CD8-positive, alpha-beta memory T cell (primary cell): ENCODE measurements at regions of chr2 and their contacts with region 1.

Region 1: DNA sequence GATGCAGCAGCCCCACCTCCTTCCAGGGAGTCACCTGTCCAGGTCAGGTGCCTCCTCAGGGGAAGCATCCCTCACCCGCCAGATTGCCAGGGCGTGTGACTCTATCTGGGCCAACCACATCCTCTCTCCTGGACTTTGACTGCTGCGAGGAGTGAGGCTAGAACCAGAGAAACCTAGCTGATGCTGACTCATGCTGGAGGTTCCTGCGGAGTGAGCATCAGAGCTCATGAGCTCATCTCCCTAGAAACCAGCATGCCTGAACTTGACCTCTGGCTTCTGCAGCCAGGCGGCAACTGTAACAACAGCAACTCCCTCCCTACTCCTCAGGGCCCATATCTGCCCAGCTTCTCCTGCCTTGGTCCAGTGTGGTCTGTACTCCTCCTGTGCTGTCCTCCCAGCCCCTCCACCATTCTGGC is 28.3 kb upstream of the NT5DC4 start:
- DNase-seq: peak in 4 of 5 donors; percentile 15 to 58 (median 29)
- H3K4me3 ChIP-seq: no peak overlapping the region
- H3K4me3 Mint-ChIP-seq: peak overlapping the region in 5 of 7 donors; percentile 36 to 63 (median 60)
- H3K27ac ChIP-seq: peak overlapping the region; percentile 21
- H3K27ac Mint-ChIP-seq: peak overlapping the region; percentile 1 to 96 (median 84)
- H3K4me1 ChIP-seq: peaks cover 26% of the 10 kb centered on the region
- H3K4me1 Mint-ChIP-seq: peaks cover 27 to 29% (median 29%) of the 10 kb centered on the region in 3 donors
- H3K27me3 ChIP-seq: no peaks in the 10 kb centered on the region
- H3K27me3 Mint-ChIP-seq: peaks cover 0 to 2% of the 10 kb centered on the region in 2 donors

Region 2: DNA sequence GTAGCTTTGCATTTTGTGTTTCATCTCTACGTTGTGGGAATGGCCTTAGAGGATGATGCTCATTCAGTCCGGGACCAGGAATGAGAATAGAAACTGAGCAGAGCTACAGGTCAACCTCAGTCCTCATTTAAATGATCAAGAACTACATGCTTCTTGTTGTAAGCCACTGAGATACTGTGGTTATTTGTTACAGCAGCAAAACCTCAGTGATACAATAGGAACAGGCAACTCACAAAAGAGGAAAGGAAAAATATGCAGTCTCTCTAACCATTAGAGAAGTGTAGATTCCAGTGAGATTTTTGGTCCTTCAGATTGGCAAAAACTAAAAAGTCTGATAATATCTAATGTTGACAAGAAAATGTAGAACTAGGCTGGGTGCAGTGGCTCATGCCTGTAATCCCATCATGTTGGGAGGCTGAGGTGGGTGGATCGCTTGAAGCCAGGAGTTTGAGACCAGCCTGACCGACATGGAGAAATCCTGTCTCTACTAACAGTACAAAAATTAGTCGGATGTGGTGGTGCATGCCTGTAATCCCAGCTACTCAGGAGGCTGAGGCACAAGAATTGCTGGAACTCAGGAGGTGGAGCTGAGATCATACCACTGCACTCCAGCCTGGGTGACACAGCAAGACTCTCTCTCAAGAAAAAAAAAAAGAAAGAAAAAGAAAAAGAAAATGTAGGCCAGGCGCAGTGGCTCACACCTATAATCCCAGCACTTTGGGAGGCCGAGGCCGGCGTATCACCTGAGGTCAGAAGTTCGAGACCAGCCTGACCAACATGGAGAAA is 94.8 kb before region 1 on chr2:
- CTCF ChIA-PET with region 1: interaction called, 13 read pairs
- POLR2A ChIA-PET with region 1: interaction called, 4 read pairs
- DNase-seq: no peak
- H3K4me3 ChIP-seq: no peak overlapping the region
- H3K4me3 Mint-ChIP-seq: no peak overlapping the region
- H3K27ac ChIP-seq: no peak overlapping the region
- H3K27ac Mint-ChIP-seq: no peak overlapping the region
- H3K4me1 ChIP-seq: peaks cover 5% of the 10 kb centered on the region
- H3K4me1 Mint-ChIP-seq: peaks cover 4 to 6% (median 5%) of the 10 kb centered on the region in 3 donors
- H3K27me3 ChIP-seq: no peaks in the 10 kb centered on the region
- H3K27me3 Mint-ChIP-seq: no peaks in the 10 kb centered on the region

Region 3: DNA sequence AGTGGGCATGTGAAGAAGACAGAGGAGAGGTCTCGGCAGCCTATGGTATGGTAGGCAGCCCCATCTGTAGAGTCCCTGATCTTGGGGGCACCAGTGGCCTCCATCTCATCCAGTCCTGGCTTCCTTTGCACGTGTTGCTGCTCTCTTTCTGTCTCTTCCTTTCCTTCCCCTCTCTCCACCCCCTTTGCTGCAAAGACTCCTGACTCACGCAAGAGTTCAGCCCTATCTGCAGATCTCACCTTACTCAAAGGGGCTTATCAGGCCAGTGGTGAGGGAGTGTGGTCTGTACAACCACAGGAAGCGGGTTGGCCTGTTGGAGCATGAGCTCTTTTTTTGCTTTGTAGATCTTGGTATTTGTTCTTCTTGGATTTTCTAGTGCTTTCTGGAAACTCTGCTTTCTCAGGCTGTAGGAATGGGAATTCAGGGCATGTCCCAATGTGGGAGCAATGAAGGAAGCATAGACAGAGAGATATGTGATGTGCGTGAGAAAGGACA is 13.7 kb after region 1 on chr2:
- CTCF ChIA-PET with region 1: interaction called, 14 read pairs
- POLR2A ChIA-PET with region 1: no interaction called
- DNase-seq: peak in 4 of 5 donors; percentile 45 to 71 (median 60)
- H3K4me3 ChIP-seq: no peak overlapping the region
- H3K4me3 Mint-ChIP-seq: peak overlapping the region in 6 of 7 donors; percentile 1 to 70 (median 49)
- H3K27ac ChIP-seq: no peak overlapping the region
- H3K27ac Mint-ChIP-seq: peak overlapping the region in 6 of 8 donors; percentile 16 to 58 (median 40)
- H3K4me1 ChIP-seq: peaks cover 16% of the 10 kb centered on the region
- H3K4me1 Mint-ChIP-seq: peaks cover 37 to 49% (median 39%) of the 10 kb centered on the region in 3 donors
- H3K27me3 ChIP-seq: no peaks in the 10 kb centered on the region
- H3K27me3 Mint-ChIP-seq: peaks cover 2 to 11% of the 10 kb centered on the region in 2 donors

Region 4: DNA sequence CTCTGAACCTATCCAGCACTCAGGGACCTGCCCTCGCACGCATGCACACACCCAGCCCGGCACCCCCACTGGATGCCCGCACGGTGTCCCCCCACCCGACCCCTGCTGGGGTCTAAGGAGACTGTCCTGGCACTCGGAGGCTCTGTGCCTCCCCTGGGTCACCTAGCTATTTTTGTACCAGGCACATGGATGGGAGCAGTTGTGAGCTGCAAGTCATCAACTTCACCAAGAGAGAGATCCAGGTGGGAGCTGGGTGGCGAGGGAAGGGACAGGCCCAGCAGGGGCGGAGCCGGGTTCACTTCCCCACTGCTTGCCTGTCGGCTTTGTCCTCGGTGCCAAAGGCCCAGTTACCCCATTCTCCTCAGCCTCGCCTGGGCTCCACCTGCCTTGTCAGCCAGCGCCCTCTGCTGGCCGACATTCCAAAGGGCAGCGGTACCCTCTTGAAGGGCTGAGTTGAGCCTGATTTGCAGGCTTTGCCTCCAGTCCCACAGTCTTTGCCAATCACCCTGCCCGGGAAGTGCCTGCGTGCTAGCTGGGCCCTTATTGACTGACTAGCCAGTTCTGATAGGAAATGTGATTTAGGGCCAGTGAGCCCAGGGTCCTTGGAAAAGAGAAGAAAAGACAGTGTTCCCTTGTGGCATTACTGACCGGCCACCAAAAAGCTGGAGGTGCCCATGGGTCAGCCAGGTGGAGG is 34.1 kb after region 1 on chr2:
- CTCF ChIA-PET with region 1: interaction called, 28 read pairs
- POLR2A ChIA-PET with region 1: no interaction called
- DNase-seq: peak; percentile 76 to 90 (median 81)
- H3K4me3 ChIP-seq: no peak overlapping the region
- H3K4me3 Mint-ChIP-seq: no peak overlapping the region
- H3K27ac ChIP-seq: no peak overlapping the region
- H3K27ac Mint-ChIP-seq: peak overlapping the region in 1 of 8 donors; percentile 19
- H3K4me1 ChIP-seq: peaks cover 5% of the 10 kb centered on the region
- H3K4me1 Mint-ChIP-seq: peaks cover 4 to 5% (median 5%) of the 10 kb centered on the region in 3 donors
- H3K27me3 ChIP-seq: no peaks in the 10 kb centered on the region
- H3K27me3 Mint-ChIP-seq: peaks cover 0 to 9% of the 10 kb centered on the region in 2 donors

Region 5: DNA sequence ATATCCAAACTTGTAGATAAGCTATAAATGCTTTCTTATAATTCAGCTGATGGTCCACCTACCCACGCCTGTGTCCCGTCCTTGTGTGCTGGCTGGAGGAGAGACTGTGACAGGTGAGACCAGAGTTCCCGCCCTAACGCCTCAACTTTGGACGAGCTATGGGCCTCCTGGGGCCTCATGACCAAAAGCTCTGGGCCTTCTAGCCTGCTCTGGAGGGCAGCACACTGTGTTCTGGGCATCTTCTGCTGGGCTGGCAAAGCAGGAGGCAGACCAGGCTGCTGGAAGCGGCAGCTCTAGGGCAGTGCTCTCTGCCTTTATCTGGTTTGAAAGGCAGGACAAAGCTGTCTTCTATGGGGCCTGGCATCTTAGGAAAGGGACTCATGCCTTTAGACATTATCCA is 612.2 kb after region 1 on chr2:
- CTCF ChIA-PET with region 1: no interaction called
- POLR2A ChIA-PET with region 1: no interaction called
- DNase-seq: no peak
- H3K4me3 ChIP-seq: no peak overlapping the region
- H3K4me3 Mint-ChIP-seq: no peak overlapping the region
- H3K27ac ChIP-seq: no peak overlapping the region
- H3K27ac Mint-ChIP-seq: no peak overlapping the region
- H3K4me1 ChIP-seq: no peaks in the 10 kb centered on the region
- H3K4me1 Mint-ChIP-seq: no peaks in the 10 kb centered on the region
- H3K27me3 ChIP-seq: no peaks in the 10 kb centered on the region
- H3K27me3 Mint-ChIP-seq: peaks cover 16 to 34% of the 10 kb centered on the region in 2 donors